Cardiac septum (tissue), 1 donor: ENCODE measurements at regions of chr7 and their contacts with region 1.

Region 1: GRCh38 chr7:150787321-150788281 is 12.6 kb downstream of the TMEM176B start:
- DNase-seq: no peak

Region 2: DNA sequence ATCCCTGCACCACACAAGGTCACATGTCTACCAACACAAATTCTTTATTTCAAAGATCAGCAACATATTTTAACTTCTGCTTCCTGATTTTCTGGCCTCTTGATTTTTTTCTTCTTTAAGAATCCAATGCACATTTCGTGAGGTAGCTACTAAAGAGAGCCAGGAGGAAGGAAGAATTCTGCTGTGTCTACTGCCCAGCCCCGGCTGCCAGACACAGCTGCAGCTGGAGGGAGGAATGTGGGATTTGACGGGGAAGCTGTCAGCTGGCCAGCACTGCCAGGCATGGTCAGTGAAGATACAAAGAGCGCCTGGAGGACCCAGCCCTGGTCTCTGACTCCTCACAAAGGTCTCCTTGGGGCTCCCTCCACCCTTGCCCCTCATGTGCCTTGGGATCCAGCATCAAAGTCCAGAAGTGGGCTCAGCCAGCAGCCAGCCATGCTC is 57.8 kb after region 1 on chr7:
- intact Hi-C with region 1: loop called (anchors 2 kb)
- DNase-seq: no peak

Region 3: GRCh38 chr7:150962553-150963399 is 175.2 kb after region 1 on chr7:
- intact Hi-C with region 1: loop called (anchors 5 kb)
- DNase-seq: no peak

Region 4: GRCh38 chr7:151057989-151058780 is 270.6 kb after region 1 on chr7:
- intact Hi-C with region 1: no loop called
- DNase-seq: peak; percentile 99